CD4-positive, alpha-beta memory T cell (primary cell): ENCODE measurements at regions of chr4 and their contacts with region 1.

Region 1: GRCh38 chr4:40897557-40898203 is 147.9 kb downstream of the NSUN7 start:
- DNase-seq: peak in 4 of 5 donors; percentile 32 to 42 (median 36)
- H3K4me3 ChIP-seq: no peak overlapping the region
- H3K4me3 Mint-ChIP-seq: peak overlapping the region; percentile 56 to 86 (median 72)
- H3K27ac ChIP-seq: no peak overlapping the region
- H3K27ac Mint-ChIP-seq: peak overlapping the region in 2 of 7 donors; percentile 43 to 68
- H3K4me1 ChIP-seq: no peaks in the 10 kb centered on the region
- H3K4me1 Mint-ChIP-seq: peaks cover 3 to 6% (median 5%) of the 10 kb centered on the region in 4 donors
- H3K27me3 ChIP-seq: no peaks in the 10 kb centered on the region
- H3K27me3 Mint-ChIP-seq: peaks cover 0 to 4% of the 10 kb centered on the region in 2 donors

Region 2: DNA sequence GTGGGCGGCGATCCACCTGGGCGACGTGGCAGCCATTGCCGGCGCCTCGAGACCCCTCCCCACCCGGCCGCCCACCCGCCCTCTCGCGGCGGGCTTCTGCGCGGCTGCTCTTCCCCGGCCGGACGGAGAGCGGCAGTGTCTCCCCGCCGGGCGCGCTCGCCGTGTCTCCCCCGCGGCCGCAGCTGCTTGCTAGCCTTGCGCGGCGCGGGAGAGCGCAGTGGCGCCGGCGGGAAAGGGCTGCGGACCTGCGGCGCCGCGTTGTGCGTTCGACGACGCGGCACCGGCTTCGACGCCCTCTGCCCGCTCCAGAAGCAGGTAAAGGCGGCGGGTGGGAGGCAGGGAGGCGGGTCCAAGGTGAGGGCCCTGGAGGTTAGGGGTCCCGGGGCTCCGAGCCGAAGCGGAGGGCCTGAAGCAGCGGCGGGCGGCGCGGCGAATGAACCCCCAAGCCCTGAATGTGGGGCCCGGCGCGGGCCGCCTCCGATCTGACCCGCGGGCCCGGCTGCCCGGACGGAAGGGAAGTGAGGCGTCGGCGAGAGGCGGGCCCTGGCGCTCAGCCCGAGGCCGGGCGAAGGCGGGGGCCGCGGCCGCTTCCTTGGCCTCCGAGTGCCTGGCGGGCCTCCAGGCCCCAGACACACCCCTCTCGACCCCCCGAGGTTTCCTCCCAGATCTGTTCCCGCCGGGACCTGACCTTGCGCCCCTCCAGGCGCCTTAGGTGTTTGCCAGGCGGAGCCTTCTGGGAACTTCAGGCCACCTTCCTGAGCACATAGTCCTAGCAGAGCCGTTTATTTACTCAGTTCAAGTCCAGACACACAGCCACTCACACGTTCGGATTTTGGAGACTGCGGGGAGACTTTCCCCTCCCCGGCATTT is 840.7 kb before region 1 on chr4 and contains the start of gene N4BP2:
- CTCF ChIA-PET with region 1: interaction called, 3 read pairs
- POLR2A ChIA-PET with region 1: no interaction called
- intact Hi-C with region 1: loop called (anchors 2 kb)
- DNase-seq: peak; percentile 60 to 78 (median 75)
- H3K4me3 ChIP-seq: peak within 1 kb of the TSS; percentile 82 to 100
- H3K4me3 Mint-ChIP-seq: peak within 1 kb of the TSS; percentile 93 to 99 (median 97)
- H3K27ac ChIP-seq: peak within 1 kb of the TSS; percentile 75
- H3K27ac Mint-ChIP-seq: peak within 1 kb of the TSS; percentile 93 to 99 (median 97)
- H3K4me1 ChIP-seq: peaks cover 36% of the 10 kb centered on the region
- H3K4me1 Mint-ChIP-seq: peaks cover 18 to 48% (median 32%) of the 10 kb centered on the region in 4 donors
- H3K27me3 ChIP-seq: no peaks in the 10 kb centered on the region
- H3K27me3 Mint-ChIP-seq: no peaks in the 10 kb centered on the region
- total RNA-seq, gene N4BP2: 15.0 to 16.7 TPM

Region 3: GRCh38 chr4:40808926-40809457 is 88.7 kb before region 1 on chr4:
- CTCF ChIA-PET with region 1: no interaction called
- POLR2A ChIA-PET with region 1: no interaction called
- intact Hi-C with region 1: no loop called
- DNase-seq: no peak
- H3K4me3 ChIP-seq: no peak overlapping the region
- H3K4me3 Mint-ChIP-seq: peak overlapping the region in 1 of 8 donors; percentile 5
- H3K27ac ChIP-seq: no peak overlapping the region
- H3K27ac Mint-ChIP-seq: no peak overlapping the region
- H3K4me1 ChIP-seq: no peaks in the 10 kb centered on the region
- H3K4me1 Mint-ChIP-seq: peaks cover 0 to 1% (median 0%) of the 10 kb centered on the region in 4 donors
- H3K27me3 ChIP-seq: no peaks in the 10 kb centered on the region
- H3K27me3 Mint-ChIP-seq: peaks cover 7% of the 10 kb centered on the region in 2 donors

Region 4: GRCh38 chr4:40840985-40841571 is 56.6 kb before region 1 on chr4:
- CTCF ChIA-PET with region 1: interaction called, 10 read pairs
- POLR2A ChIA-PET with region 1: no interaction called
- intact Hi-C with region 1: loop called (anchors 2 kb)
- DNase-seq: peak; percentile 23 to 45 (median 41)
- H3K4me3 ChIP-seq: no peak overlapping the region
- H3K4me3 Mint-ChIP-seq: no peak overlapping the region
- H3K27ac ChIP-seq: no peak overlapping the region
- H3K27ac Mint-ChIP-seq: peak overlapping the region in 1 of 7 donors; percentile 37
- H3K4me1 ChIP-seq: no peaks in the 10 kb centered on the region
- H3K4me1 Mint-ChIP-seq: no peaks in the 10 kb centered on the region
- H3K27me3 ChIP-seq: no peaks in the 10 kb centered on the region
- H3K27me3 Mint-ChIP-seq: peaks cover 6 to 8% of the 10 kb centered on the region in 2 donors

Region 5: DNA sequence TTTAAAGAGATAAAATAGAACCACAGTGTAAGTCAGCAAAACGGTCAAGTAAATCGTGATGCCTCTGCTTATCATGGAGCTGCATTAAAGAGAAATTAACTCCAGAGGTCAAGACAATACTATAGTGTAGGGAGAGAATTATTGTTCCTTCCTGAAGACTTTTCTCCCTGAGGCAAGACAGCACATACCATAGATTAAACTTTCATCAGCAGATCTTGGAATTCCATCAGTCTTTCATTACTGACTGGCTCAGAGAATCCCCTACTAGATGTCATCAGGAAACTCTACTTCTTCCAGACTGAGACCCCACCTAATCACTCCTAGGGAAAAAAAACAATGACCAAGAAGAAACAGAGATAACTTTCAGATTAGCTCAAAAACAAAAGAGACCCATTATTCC is 16.6 kb before region 1 on chr4:
- CTCF ChIA-PET with region 1: interaction called, 21 read pairs
- POLR2A ChIA-PET with region 1: no interaction called
- intact Hi-C with region 1: no loop called
- DNase-seq: no peak
- H3K4me3 ChIP-seq: no peak overlapping the region
- H3K4me3 Mint-ChIP-seq: no peak overlapping the region
- H3K27ac ChIP-seq: no peak overlapping the region
- H3K27ac Mint-ChIP-seq: no peak overlapping the region
- H3K4me1 ChIP-seq: no peaks in the 10 kb centered on the region
- H3K4me1 Mint-ChIP-seq: no peaks in the 10 kb centered on the region
- H3K27me3 ChIP-seq: no peaks in the 10 kb centered on the region
- H3K27me3 Mint-ChIP-seq: peaks cover 16 to 35% of the 10 kb centered on the region in 2 donors

Region 6: DNA sequence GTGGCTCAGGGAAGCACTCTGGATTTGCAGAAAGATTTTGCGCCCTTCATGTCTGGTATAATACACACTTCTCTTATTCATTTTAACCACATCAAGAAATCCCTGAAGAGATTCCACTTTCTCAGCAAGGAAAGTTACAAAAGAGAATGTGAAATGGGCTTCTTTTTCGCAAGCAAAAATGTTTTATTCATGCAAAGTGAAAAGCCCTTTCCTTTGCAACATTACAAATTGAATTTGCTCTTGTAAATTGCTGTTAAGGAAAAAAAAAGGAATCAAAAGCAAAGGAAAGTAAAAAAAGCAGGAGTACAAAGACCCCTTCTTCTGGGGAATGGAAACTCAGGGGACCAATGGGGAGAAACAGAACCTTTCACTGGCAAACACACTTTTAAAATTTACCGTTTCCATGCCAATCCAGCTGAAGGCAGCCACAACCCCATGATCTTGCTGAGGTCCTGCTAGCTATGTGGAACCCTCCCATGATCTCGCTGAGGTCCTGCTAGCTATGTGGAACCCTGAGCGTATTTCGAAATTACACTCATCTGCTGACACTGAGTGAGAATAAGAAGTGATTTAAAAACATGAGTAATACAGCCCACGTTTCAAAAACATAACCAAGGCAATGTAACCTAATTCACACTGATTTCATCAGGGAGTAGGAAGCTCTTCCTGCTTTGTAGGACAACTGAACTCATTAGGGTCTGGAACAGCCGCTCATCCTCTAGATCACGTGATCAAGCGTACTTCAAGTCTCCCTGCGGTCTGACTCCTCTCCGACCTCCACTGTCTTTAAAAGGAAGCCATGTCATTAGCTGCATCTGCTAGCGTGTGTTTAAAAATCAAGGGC is 10.2 kb before region 1 on chr4:
- CTCF ChIA-PET with region 1: interaction called, 21 read pairs
- POLR2A ChIA-PET with region 1: no interaction called
- intact Hi-C with region 1: no loop called
- DNase-seq: no peak
- H3K4me3 ChIP-seq: no peak overlapping the region
- H3K4me3 Mint-ChIP-seq: no peak overlapping the region
- H3K27ac ChIP-seq: no peak overlapping the region
- H3K27ac Mint-ChIP-seq: no peak overlapping the region
- H3K4me1 ChIP-seq: no peaks in the 10 kb centered on the region
- H3K4me1 Mint-ChIP-seq: no peaks in the 10 kb centered on the region
- H3K27me3 ChIP-seq: no peaks in the 10 kb centered on the region
- H3K27me3 Mint-ChIP-seq: peaks cover 12 to 13% of the 10 kb centered on the region in 2 donors

Region 7: GRCh38 chr4:40908702-40909362 is 11.2 kb after region 1 on chr4:
- CTCF ChIA-PET with region 1: interaction called, 100 read pairs
- POLR2A ChIA-PET with region 1: no interaction called
- intact Hi-C with region 1: no loop called
- DNase-seq: peak in 4 of 5 donors; percentile 49 to 56 (median 54)
- H3K4me3 ChIP-seq: no peak overlapping the region
- H3K4me3 Mint-ChIP-seq: peak overlapping the region in 1 of 8 donors; percentile 48
- H3K27ac ChIP-seq: no peak overlapping the region
- H3K27ac Mint-ChIP-seq: peak overlapping the region in 4 of 7 donors; percentile 2 to 53 (median 39)
- H3K4me1 ChIP-seq: peaks cover 11% of the 10 kb centered on the region
- H3K4me1 Mint-ChIP-seq: peaks cover 10 to 15% (median 12%) of the 10 kb centered on the region in 4 donors
- H3K27me3 ChIP-seq: no peaks in the 10 kb centered on the region
- H3K27me3 Mint-ChIP-seq: no peaks in the 10 kb centered on the region

Region 8: GRCh38 chr4:40924096-40924792 is 26.6 kb after region 1 on chr4:
- CTCF ChIA-PET with region 1: interaction called, 44 read pairs
- POLR2A ChIA-PET with region 1: no interaction called
- intact Hi-C with region 1: no loop called
- DNase-seq: peak in 4 of 5 donors; percentile 32 to 47 (median 38)
- H3K4me3 ChIP-seq: no peak overlapping the region
- H3K4me3 Mint-ChIP-seq: no peak overlapping the region
- H3K27ac ChIP-seq: no peak overlapping the region
- H3K27ac Mint-ChIP-seq: peak overlapping the region in 1 of 7 donors; percentile 42
- H3K4me1 ChIP-seq: no peaks in the 10 kb centered on the region
- H3K4me1 Mint-ChIP-seq: peaks cover 0 to 6% (median 2%) of the 10 kb centered on the region in 4 donors
- H3K27me3 ChIP-seq: no peaks in the 10 kb centered on the region
- H3K27me3 Mint-ChIP-seq: peaks cover 14 to 17% of the 10 kb centered on the region in 2 donors